ENCODE measurements at regions of chr3 and their contacts with region 1.

Region 1: DNA sequence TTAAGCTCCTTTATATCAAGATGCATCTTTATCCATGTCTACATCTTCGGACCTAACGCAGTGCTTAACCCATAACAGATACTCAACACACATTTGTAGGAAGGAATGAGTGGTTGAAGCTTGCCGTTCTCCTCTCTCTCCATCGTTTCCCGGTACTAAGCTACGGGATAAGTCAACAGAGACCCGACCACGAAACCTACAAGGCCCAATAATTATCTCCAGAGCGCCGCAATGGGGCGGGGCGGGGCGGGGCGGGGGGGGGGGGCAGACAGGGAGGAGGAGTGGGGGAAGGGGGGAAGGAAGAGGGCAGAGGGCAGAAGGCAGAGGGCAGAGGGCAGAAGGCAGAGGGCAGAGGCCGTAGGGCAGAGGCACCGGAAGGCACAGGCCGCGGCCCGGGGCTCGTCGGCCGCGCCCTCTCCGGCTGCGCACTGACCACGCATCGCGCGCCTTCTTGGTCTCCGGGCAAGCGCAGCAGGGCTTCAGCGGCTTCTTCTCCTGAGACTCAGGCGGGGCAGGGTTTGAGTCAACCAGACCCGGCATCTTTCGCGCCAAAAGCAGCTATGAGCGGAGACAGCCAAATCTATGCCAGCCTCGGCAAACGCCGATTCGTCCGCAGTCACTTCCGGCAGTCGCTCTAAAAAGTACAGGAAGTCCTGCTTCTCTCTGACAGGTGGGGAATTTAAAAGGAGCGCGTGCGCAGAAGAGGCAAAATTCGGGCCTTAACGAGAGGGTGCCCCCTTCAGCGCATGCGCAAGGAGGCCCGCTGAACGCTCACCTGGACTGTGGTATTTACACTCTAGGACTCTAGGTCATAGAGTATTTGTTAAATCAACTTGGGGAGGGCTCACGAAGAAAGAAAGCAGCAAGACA is at the start of gene COX17:
- DNase-seq: peak; percentile 97
- H3K4me3 Mint-ChIP-seq: peak within 1 kb of the TSS; percentile 74
- H3K27ac Mint-ChIP-seq: peak within 1 kb of the TSS; percentile 92
- H3K4me1 Mint-ChIP-seq: peaks cover 29% of the 10 kb centered on the region
- H3K27me3 Mint-ChIP-seq: no peaks in the 10 kb centered on the region
- total RNA-seq, gene COX17: 63.7 to 69.8 TPM

Region 2: GRCh38 chr3:118884748-118885206 is 792.2 kb before region 1 on chr3:
- CTCF ChIA-PET with region 1: interaction called, 29 read pairs
- POLR2A ChIA-PET with region 1: no interaction called
- DNase-seq: peak; percentile 75
- H3K4me3 Mint-ChIP-seq: no peak overlapping the region
- H3K27ac Mint-ChIP-seq: no peak overlapping the region
- H3K4me1 Mint-ChIP-seq: no peaks in the 10 kb centered on the region
- H3K27me3 Mint-ChIP-seq: peaks cover 30% of the 10 kb centered on the region

Region 3: GRCh38 chr3:119463171-119464169 is 213.5 kb before region 1 on chr3 and contains the start of gene TMEM39A:
- CTCF ChIA-PET with region 1: interaction called, 7 read pairs
- POLR2A ChIA-PET with region 1: interaction called, 33 read pairs
- DNase-seq: peak; percentile 99
- H3K4me3 Mint-ChIP-seq: peak within 1 kb of the TSS; percentile 97
- H3K27ac Mint-ChIP-seq: peak within 1 kb of the TSS; percentile 96
- H3K4me1 Mint-ChIP-seq: peaks cover 54% of the 10 kb centered on the region
- H3K27me3 Mint-ChIP-seq: no peaks in the 10 kb centered on the region
- total RNA-seq, gene TMEM39A: 42.7 to 42.8 TPM

Region 4: GRCh38 chr3:119559441-119559963 is 117.5 kb before region 1 on chr3 and contains the start of gene CD80:
- CTCF ChIA-PET with region 1: interaction called, 18 read pairs
- POLR2A ChIA-PET with region 1: interaction called, 32 read pairs
- DNase-seq: peak; percentile 87
- H3K4me3 Mint-ChIP-seq: peak within 1 kb of the TSS; percentile 70
- H3K27ac Mint-ChIP-seq: peak within 1 kb of the TSS; percentile 80
- H3K4me1 Mint-ChIP-seq: peaks cover 70% of the 10 kb centered on the region
- H3K27me3 Mint-ChIP-seq: no peaks in the 10 kb centered on the region
- total RNA-seq, gene CD80: 27.1 to 29.5 TPM

Region 5: DNA sequence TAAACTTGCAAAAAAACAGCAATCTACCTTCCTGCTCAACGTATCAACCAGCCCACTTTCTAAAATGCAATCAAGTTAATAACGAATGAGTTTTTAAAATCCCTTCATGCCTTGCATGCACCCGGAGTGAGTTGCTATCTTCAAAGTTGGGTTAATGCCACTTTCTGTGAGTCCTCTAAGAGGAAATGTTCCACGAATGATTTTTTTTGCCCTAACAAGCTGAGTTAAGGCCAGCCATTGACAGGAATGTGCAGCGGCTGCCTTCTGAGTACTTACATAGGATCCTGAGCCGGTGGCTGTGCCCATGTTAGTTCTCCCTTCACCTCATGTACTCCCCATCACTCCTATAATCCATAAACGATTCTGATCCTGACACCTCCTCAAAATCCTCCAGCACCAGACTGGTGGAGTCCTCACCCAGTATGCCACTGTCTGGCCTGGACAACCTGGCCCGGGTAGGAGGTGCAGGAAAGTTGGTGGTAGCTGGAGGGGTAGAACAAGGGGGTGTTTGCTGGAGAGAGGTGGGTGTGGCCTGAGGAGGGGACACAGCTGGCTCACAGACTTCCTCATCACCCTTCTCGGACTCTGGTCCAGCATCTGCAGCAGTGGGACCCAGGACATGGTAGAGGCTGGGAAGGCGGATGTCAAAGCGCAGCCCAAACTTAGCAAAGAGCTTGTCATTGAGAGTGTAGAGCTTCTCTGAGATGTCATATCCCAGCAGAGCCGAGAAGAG is 29.0 kb before region 1 on chr3:
- CTCF ChIA-PET with region 1: no interaction called
- POLR2A ChIA-PET with region 1: interaction called, 10 read pairs
- DNase-seq: no peak
- H3K4me3 Mint-ChIP-seq: no peak overlapping the region
- H3K27ac Mint-ChIP-seq: no peak overlapping the region
- H3K4me1 Mint-ChIP-seq: peaks cover 13% of the 10 kb centered on the region
- H3K27me3 Mint-ChIP-seq: no peaks in the 10 kb centered on the region

Region 6: DNA sequence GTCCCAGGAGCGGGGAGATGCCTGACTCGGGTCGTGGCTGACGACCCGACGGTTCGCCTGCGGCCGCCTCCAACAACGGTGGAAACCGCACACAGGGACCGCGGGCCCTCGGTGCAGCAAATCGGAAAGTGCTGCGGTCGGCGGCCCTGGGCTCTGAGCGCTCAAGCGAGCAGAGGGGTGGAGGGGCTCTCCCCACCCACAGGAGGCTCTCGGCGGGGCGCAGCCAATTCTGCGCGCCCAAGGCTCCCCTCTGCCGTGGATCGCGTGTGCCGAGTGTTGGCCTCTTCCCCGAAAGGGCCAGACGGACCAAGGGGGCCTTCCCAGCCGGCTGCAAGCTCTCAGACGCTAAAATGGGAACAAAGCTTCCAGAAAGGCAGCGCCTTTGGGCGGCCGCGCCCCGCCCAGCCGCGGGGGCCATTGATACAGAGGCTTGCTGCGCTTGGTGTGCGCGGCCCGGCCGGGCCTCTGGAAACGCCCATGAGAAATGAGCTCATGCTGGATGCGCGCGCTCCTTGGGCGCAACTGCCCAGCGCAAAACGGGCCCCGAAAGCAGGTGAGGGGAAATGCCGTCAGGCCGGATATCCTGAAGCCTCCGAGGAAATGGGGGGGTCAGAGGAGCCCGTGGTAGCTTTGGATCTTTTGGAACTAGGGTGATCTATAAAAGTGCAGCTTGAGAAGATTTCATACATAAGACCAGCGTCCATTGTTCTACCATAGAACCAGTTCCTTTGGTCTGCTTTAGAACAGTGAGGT is 418.4 kb after region 1 on chr3:
- CTCF ChIA-PET with region 1: no interaction called
- POLR2A ChIA-PET with region 1: interaction called, 11 read pairs
- DNase-seq: peak; percentile 93
- H3K4me3 Mint-ChIP-seq: no peak overlapping the region
- H3K27ac Mint-ChIP-seq: no peak overlapping the region
- H3K4me1 Mint-ChIP-seq: peaks cover 24% of the 10 kb centered on the region
- H3K27me3 Mint-ChIP-seq: no peaks in the 10 kb centered on the region

Measured in activated CD4-positive, alpha-beta memory T cell treated with anti-CD3 and anti-CD28 coated beads, Interleukin-2, amount 10 ng/mL, durations not matched to agents 7 days and 5 days (primary cell).